ENCODE measurements at regions of chr18 and their contacts with region 1.

Region 1: GRCh38 chr18:48475635-48476549 is 62.9 kb upstream of the CTIF start:
- DNase-seq: no peak
- ATAC-seq: peak; percentile 92

Region 2: DNA sequence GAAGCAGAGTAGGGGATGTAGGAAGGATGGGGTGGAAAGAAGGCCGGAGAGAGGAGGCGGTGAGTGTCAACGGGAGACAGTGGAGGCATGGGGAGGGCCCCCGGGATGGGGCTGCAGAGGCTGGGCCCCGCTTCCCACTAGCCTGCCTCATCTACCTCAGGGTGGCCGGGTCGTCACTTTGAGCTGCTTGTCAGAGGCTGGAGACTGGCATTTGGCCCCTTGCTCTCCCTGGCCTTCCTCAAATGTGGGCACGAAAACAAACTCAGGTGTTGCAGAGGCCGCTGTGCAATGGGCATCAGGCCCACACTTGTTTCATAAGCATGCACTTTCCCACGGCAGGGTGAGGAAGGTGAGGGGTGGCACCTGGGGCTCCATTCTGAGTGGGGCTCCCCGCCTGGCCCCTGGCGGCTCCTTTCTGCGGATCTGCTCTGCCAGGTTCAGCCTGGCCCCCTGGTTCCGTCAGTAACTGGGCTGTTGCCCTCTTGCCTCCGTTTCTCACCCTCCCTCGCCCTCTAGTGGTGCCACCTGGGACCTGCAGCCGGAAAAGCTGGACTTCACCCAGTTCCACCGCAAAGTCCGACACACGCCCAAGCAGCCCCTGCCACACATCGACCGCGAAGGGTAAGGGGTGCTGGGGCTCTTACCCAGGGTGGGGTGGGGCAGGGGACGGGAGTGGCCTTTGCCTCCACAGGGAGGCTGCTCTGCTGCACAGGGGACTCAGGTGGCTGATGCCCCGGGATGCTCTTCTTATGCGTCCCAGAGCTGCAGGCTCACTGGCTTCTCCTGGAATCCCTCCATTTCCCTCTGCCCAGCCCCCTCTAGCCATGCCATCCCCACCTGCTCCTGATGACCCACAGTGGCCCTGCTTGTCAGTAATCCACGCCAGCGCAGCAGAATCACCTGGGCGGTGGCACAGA is 188.3 kb after region 1 on chr18:
- intact Hi-C with region 1: loop called (anchors 5 kb)
- DNase-seq: peak; percentile 88
- ATAC-seq: peak; percentile 64

Measured in sciatic nerve (tissue), 2 donors.